Panc1 (cell line): ENCODE measurements at regions of chr2 and their contacts with region 1.

Region 1: DNA sequence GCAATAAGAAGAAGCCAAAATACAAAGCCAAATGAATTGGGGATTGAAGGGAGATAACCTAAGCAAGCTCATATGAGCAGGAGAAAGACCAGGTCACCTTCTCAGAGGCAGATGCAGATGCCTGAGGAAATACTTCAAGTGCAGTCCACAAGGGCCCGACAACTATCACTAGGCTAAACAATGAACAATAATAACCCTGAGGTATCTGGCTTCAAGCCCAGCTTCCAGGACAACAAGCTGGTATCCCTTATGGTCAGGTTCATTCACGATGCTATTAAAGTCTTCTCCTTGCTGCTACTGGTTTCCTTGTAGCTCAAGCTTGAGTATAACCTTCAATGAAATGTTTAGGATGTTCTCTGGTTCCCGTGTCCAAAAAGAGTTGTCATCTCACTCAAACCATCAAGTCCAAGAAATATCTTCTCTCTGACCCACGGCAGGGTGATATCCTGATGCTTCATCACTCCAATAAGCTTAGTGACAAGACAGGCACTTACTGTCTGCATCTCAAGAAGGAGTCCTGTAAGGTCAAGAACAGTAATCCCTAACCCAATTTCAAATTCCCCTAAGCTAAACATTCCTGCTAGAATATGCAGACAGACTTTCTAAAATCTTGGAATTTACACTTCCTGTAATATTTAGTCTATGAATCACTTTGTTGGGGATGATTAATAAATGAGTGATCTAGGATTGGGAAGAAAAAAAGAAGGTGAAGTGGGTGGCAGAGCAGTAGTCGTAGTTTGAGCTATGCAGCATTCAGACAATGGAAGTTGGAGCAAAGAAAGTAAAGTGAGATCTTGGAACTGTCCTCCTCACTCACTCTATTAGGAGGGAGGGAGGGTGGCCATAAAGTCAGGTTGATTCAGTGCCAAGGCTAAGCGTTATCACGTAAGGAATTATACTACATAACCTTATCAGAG is 33.1 kb downstream of the CHN1 start:
- DNase-seq: peak; percentile 25
- ATAC-seq: peak; percentile 83
- H3K4me3 ChIP-seq: no peak overlapping the region
- H3K27ac ChIP-seq: 0 out of 2 replicates have a peak overlapping the region, but pooled peaks have one; percentile 21
- H3K4me1 ChIP-seq: peaks cover 15% of the 10 kb centered on the region
- H3K27me3 ChIP-seq: no peaks in the 10 kb centered on the region
- CTCF ChIP-seq: no peak

Region 2: DNA sequence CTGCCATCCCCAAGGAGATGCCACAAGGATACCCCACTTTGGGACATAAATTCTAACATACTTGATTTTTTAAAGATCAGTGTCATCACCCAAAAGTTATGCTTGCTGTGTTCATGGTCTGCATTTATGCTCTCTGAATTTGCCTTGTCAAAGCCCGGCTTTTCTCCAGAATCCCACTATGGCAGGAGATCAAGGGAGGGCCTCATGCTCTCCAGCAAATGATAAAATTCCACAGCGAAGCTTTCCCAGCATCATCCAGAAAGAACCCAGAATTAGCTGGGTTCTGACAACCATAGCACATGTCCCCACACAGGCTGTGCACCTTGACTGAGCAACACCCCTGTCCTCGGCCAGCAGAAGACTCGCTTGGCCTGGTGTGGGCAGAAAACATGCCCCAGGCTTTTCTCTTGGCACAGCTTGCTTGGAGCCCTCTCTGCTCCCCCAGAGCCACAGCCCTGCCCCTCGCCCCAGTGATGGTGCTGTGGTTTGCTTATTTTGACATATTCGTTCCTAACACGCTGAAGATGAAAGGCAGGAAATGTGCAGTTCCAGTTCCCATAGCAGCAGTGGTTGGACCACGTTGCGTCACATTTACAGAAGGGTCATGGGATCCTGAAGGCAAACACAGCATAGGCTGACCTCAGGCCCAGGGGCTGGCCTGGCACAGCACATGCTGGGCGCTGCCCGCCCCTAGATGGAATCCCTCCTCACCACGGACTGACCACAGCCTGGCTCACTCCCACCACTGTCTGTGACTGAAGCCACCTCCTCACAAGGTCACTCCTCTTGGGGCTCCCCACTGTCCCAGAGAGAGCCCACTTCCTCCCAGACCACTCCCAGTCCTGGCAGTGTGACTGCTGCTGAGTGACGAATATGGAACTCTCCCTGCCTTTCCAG is 193.8 kb before region 1 on chr2:
- CTCF ChIA-PET with region 1: no interaction called
- POLR2A ChIA-PET with region 1: no interaction called
- in situ Hi-C with region 1: loop called (anchors 25 kb)
- intact Hi-C with region 1: no loop called
- DNase-seq: no peak
- ATAC-seq: no peak
- H3K4me3 ChIP-seq: no peak overlapping the region
- H3K27ac ChIP-seq: no peak overlapping the region
- H3K4me1 ChIP-seq: no peaks in the 10 kb centered on the region
- H3K27me3 ChIP-seq: no peaks in the 10 kb centered on the region
- CTCF ChIP-seq: no peak